Heart right ventricle (tissue), 16 donors: ENCODE measurements at regions of chr3 and their contacts with region 1.

Region 1: DNA sequence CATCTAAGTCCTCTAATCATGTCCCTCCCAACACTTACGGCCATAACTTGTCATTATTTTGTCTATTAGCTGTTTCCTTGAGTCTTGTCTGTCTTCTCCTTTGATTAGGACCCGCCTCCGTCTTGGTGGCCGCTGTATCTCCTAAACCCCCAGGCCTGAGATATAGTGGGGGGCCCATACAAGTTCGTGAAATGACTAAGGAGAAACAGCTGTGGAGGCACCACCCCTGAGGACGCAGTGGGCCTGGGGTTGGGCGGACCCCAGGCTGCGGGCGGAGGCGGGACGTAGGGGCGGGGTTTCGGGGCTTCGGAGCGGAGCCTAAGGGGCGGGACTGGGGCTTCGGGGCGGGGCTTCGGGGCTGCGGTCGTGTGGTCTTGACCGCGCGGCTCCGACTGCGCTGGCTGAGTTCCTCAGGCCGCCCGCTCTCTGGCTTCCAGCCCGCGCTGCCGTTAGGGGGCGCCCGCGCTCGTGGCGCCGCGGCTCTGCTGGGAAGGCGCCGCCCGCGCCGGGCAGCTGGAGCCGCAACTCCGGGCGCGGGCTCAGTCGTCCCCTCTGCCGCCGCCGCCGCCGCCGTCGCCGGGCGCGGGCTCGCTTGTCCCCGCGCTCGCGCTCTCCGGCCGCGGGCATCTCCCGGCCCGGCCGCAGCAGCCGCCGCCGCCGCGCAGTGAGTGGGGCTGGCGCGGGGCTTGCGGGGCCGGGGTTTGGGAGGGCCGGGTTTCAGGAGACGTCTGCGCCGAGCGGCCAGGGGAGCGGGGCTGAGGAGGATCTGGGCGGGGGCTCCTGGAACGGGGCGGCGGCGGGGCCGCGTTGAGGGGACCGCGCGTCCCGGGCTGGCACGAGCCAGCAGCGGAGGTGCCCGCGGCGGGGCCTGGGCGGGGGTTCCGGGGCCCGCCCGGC is at the start of gene KCTD6:
- DNase-seq: peak; percentile 93 to 96
- ATAC-seq: peak; percentile 96 to 98 (median 98)
- H3K4me3 ChIP-seq: peak within 1 kb of the TSS; percentile 26 to 96 (median 80)
- H3K27ac ChIP-seq: peak within 1 kb of the TSS; percentile 72 to 94 (median 82)
- H3K4me1 ChIP-seq: peaks cover 5 to 73% (median 50%) of the 10 kb centered on the region in 9 donors
- H3K27me3 ChIP-seq: no peaks in the 10 kb centered on the region
- CTCF ChIP-seq: peak; percentile 61 to 90 (median 78)
- total RNA-seq, gene KCTD6: 3.6 to 8.9 (median 7.2) TPM

Region 2: GRCh38 chr3:58332575-58333188 is 159.1 kb before region 1 on chr3 and contains the start of gene PXK:
- intact Hi-C with region 1: loop called in 8 of 10 experiments (anchors 2 to 10 kb)
- DNase-seq: peak; percentile 78 to 85
- ATAC-seq: peak; percentile 93 to 98 (median 96)
- H3K4me3 ChIP-seq: peak within 1 kb of the TSS; percentile 61 to 95 (median 79)
- H3K27ac ChIP-seq: peak within 1 kb of the TSS in 9 of 10 donors; percentile 43 to 89 (median 70)
- H3K4me1 ChIP-seq: peaks cover 3 to 41% (median 19%) of the 10 kb centered on the region in 9 donors
- H3K27me3 ChIP-seq: no peaks in the 10 kb centered on the region
- CTCF ChIP-seq: peak in 5 of 9 donors; percentile 6 to 42 (median 21)
- total RNA-seq, gene PXK: 7.9 to 16.3 (median 11.7) TPM

Region 3: DNA sequence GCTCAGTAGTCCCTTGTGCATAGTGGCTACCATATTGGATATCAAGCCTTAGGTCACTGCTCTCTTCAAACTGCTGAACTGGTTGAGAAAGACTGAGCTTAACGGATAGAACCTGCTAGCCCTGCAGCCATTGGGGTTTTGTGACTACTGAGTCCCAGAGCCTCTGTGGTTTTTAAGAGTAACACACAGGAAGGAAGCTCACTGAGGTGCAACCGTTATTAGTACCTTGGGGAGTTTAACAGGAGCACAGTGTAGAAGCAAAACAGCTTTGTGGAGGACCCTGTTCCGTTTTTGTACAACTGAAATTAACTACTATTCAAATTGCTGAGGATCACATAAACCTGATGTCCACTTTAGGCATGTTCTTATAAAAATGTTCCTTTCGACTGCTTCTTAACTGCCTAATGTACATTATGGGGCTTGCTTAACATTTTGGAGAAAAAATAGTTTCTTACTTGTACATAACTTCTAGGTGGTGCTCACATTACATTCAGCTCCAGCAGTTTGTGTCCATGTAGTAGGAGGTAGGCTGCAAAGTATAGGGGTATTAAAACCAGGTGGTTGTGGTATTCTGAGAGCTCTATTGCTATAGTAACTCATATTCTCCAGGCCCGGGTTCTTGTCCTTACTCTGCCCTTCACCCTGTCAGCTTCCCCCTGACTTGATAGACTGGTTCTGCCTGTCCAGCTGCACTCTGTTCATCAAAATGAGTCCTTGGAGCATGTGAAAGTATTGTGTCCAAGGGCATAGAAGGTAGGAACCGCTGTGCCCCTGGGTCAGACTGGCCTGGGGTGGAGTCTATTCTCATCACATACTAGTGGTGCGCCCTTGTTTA is 141.7 kb before region 1 on chr3:
- intact Hi-C with region 1: loop called in 1 of 10 experiments (anchors 10 kb)
- DNase-seq: no peak
- ATAC-seq: peak in 1 of 8 donors; percentile 11
- H3K4me3 ChIP-seq: no peak overlapping the region
- H3K27ac ChIP-seq: peak overlapping the region in 1 of 10 donors; percentile 55
- H3K4me1 ChIP-seq: peaks cover 0 to 62% (median 0%) of the 10 kb centered on the region in 9 donors
- H3K27me3 ChIP-seq: no peaks in the 10 kb centered on the region
- CTCF ChIP-seq: no peak

Region 4: GRCh38 chr3:58433400-58434169 is 58.2 kb before region 1 on chr3 and contains the start of gene PDHB:
- intact Hi-C with region 1: loop called in 6 of 10 experiments (anchors 2 to 5 kb)
- DNase-seq: peak; percentile 92 to 95
- ATAC-seq: peak; percentile 97 to 99 (median 98)
- H3K4me3 ChIP-seq: peak within 1 kb of the TSS; percentile 42 to 93 (median 72)
- H3K27ac ChIP-seq: peak within 1 kb of the TSS; percentile 75 to 98 (median 96)
- H3K4me1 ChIP-seq: peaks cover 0 to 34% (median 30%) of the 10 kb centered on the region in 9 donors
- H3K27me3 ChIP-seq: no peaks in the 10 kb centered on the region
- CTCF ChIP-seq: peak in 2 of 9 donors; percentile 9 to 21
- total RNA-seq, gene PDHB: 170 to 255 (median 217) TPM